CD4-positive, alpha-beta memory T cell (primary cell): ENCODE measurements at regions of chr12 and their contacts with region 1.

Region 1: GRCh38 chr12:131104463-131105350 is 151.0 kb downstream of the ADGRD1 start:
- DNase-seq: peak; percentile 60 to 76 (median 65)
- H3K4me3 ChIP-seq: no peak overlapping the region
- H3K4me3 Mint-ChIP-seq: peak overlapping the region in 6 of 8 donors; percentile 30 to 66 (median 56)
- H3K27ac ChIP-seq: no peak overlapping the region
- H3K27ac Mint-ChIP-seq: peak overlapping the region in 3 of 7 donors; percentile 34 to 56 (median 47)
- H3K4me1 ChIP-seq: peaks cover 24% of the 10 kb centered on the region
- H3K4me1 Mint-ChIP-seq: peaks cover 7 to 18% (median 10%) of the 10 kb centered on the region in 4 donors
- H3K27me3 ChIP-seq: no peaks in the 10 kb centered on the region
- H3K27me3 Mint-ChIP-seq: peaks cover 0 to 4% of the 10 kb centered on the region in 2 donors

Region 2: GRCh38 chr12:130826149-130826801 is 278.4 kb before region 1 on chr12:
- CTCF ChIA-PET with region 1: interaction called, 26 read pairs
- POLR2A ChIA-PET with region 1: no interaction called
- intact Hi-C with region 1: no loop called
- DNase-seq: peak; percentile 61 to 70 (median 68)
- H3K4me3 ChIP-seq: no peak overlapping the region
- H3K4me3 Mint-ChIP-seq: no peak overlapping the region
- H3K27ac ChIP-seq: no peak overlapping the region
- H3K27ac Mint-ChIP-seq: peak overlapping the region in 3 of 7 donors; percentile 4 to 61 (median 6)
- H3K4me1 ChIP-seq: no peaks in the 10 kb centered on the region
- H3K4me1 Mint-ChIP-seq: peaks cover 10 to 19% (median 13%) of the 10 kb centered on the region in 4 donors
- H3K27me3 ChIP-seq: no peaks in the 10 kb centered on the region
- H3K27me3 Mint-ChIP-seq: no peaks in the 10 kb centered on the region

Region 3: GRCh38 chr12:130925666-130926015 is 179.1 kb before region 1 on chr12:
- CTCF ChIA-PET with region 1: no interaction called
- POLR2A ChIA-PET with region 1: no interaction called
- intact Hi-C with region 1: no loop called
- DNase-seq: no peak
- H3K4me3 ChIP-seq: no peak overlapping the region
- H3K4me3 Mint-ChIP-seq: no peak overlapping the region
- H3K27ac ChIP-seq: no peak overlapping the region
- H3K27ac Mint-ChIP-seq: no peak overlapping the region
- H3K4me1 ChIP-seq: no peaks in the 10 kb centered on the region
- H3K4me1 Mint-ChIP-seq: no peaks in the 10 kb centered on the region
- H3K27me3 ChIP-seq: no peaks in the 10 kb centered on the region
- H3K27me3 Mint-ChIP-seq: peaks cover 23 to 33% of the 10 kb centered on the region in 2 donors

Region 4: GRCh38 chr12:131116391-131117117 is 11.8 kb after region 1 on chr12:
- CTCF ChIA-PET with region 1: interaction called, 43 read pairs
- POLR2A ChIA-PET with region 1: no interaction called
- intact Hi-C with region 1: no loop called
- DNase-seq: no peak
- H3K4me3 ChIP-seq: no peak overlapping the region
- H3K4me3 Mint-ChIP-seq: no peak overlapping the region
- H3K27ac ChIP-seq: no peak overlapping the region
- H3K27ac Mint-ChIP-seq: no peak overlapping the region
- H3K4me1 ChIP-seq: no peaks in the 10 kb centered on the region
- H3K4me1 Mint-ChIP-seq: no peaks in the 10 kb centered on the region
- H3K27me3 ChIP-seq: no peaks in the 10 kb centered on the region
- H3K27me3 Mint-ChIP-seq: peaks cover 0 to 7% of the 10 kb centered on the region in 2 donors

Region 5: DNA sequence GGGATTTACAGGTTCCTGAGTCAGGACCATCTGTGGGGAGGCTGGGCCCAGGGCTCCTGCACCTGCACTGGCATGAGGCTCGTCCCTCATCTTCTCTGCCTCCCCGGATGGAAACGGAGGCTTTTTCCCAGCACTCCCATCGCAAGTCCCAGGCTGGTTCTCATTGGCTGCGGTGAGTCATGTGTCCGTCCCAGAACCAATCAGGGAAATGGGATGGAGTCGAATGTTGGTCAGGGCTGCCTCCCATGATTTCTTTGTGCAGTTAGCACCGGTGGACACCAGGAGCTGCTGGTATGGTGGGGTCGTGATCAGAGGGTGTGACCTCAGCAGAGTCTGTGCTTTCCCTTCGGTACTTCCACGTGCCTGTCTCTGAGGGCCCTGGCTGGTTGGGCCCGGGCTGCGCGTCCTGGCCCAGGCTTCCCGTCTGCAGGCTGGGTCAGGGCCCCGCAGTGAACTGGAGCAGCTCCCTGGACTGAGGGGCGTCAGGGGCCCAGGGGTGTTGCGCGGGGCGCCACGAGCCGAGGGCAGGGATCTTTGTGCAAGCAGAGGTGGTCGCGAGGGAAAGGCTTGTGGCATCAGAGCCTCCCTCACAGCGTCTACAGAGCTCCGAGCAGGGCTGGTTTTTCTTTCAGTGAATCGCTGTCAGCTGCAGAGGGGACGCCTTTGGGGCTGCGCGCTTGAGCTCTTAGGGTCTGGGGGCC is 17.1 kb after region 1 on chr12:
- CTCF ChIA-PET with region 1: interaction called, 43 read pairs
- POLR2A ChIA-PET with region 1: no interaction called
- intact Hi-C with region 1: no loop called
- DNase-seq: no peak
- H3K4me3 ChIP-seq: no peak overlapping the region
- H3K4me3 Mint-ChIP-seq: no peak overlapping the region
- H3K27ac ChIP-seq: no peak overlapping the region
- H3K27ac Mint-ChIP-seq: no peak overlapping the region
- H3K4me1 ChIP-seq: no peaks in the 10 kb centered on the region
- H3K4me1 Mint-ChIP-seq: no peaks in the 10 kb centered on the region
- H3K27me3 ChIP-seq: no peaks in the 10 kb centered on the region
- H3K27me3 Mint-ChIP-seq: peaks cover 0 to 2% of the 10 kb centered on the region in 2 donors

Region 6: GRCh38 chr12:131132118-131132892 is 27.6 kb after region 1 on chr12:
- CTCF ChIA-PET with region 1: interaction called, 55 read pairs
- POLR2A ChIA-PET with region 1: no interaction called
- intact Hi-C with region 1: no loop called
- DNase-seq: peak; percentile 54 to 68 (median 58)
- H3K4me3 ChIP-seq: no peak overlapping the region
- H3K4me3 Mint-ChIP-seq: no peak overlapping the region
- H3K27ac ChIP-seq: no peak overlapping the region
- H3K27ac Mint-ChIP-seq: peak overlapping the region in 1 of 7 donors; percentile 31
- H3K4me1 ChIP-seq: peaks cover 6% of the 10 kb centered on the region
- H3K4me1 Mint-ChIP-seq: peaks cover 0 to 2% (median under 1%) of the 10 kb centered on the region in 4 donors
- H3K27me3 ChIP-seq: no peaks in the 10 kb centered on the region
- H3K27me3 Mint-ChIP-seq: no peaks in the 10 kb centered on the region

Region 7: DNA sequence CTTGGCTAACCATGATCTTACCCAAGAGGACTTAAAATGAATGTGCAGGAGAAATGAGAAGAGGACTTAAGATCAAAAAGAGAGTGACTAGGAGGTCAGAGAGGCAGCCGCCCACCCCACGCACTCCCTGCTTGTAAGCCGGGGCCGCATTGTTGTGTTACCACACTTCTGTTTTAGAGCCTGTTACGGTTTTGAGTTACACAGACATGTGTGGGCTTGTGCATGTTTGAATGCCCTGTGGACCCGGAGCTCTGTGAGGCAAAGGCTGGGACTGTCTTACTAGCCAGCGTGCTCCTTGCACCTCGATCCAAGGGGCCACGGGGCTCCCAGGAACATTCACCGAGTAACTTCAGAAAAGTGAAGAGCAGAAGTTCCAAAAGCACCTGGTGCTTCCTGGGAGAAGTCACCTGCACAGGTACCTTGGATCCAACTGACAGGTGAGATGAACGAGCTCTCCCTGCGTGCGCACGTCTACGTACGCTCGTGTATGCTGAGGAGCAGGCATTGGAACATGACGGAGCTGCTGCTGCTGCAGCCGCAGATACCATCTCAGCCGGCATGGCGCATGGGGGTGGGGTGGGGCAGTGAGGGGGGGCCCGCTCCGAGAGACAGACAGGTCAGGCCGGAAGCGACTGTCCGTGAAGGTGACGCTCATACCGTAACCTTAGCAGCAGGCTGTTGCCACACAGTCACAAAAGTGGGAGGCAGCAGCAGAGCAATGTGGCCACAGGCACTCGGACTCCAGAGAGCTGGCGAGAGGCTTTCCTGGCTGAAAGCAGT is 629.8 kb after region 1 on chr12:
- CTCF ChIA-PET with region 1: no interaction called
- POLR2A ChIA-PET with region 1: no interaction called
- intact Hi-C with region 1: no loop called
- DNase-seq: no peak
- H3K4me3 ChIP-seq: no peak overlapping the region
- H3K4me3 Mint-ChIP-seq: no peak overlapping the region
- H3K27ac ChIP-seq: no peak overlapping the region
- H3K27ac Mint-ChIP-seq: peak overlapping the region in 1 of 7 donors; percentile 63
- H3K4me1 ChIP-seq: no peaks in the 10 kb centered on the region
- H3K4me1 Mint-ChIP-seq: peaks cover 0 to 3% (median under 1%) of the 10 kb centered on the region in 4 donors
- H3K27me3 ChIP-seq: no peaks in the 10 kb centered on the region
- H3K27me3 Mint-ChIP-seq: no peaks in the 10 kb centered on the region

Region 8: DNA sequence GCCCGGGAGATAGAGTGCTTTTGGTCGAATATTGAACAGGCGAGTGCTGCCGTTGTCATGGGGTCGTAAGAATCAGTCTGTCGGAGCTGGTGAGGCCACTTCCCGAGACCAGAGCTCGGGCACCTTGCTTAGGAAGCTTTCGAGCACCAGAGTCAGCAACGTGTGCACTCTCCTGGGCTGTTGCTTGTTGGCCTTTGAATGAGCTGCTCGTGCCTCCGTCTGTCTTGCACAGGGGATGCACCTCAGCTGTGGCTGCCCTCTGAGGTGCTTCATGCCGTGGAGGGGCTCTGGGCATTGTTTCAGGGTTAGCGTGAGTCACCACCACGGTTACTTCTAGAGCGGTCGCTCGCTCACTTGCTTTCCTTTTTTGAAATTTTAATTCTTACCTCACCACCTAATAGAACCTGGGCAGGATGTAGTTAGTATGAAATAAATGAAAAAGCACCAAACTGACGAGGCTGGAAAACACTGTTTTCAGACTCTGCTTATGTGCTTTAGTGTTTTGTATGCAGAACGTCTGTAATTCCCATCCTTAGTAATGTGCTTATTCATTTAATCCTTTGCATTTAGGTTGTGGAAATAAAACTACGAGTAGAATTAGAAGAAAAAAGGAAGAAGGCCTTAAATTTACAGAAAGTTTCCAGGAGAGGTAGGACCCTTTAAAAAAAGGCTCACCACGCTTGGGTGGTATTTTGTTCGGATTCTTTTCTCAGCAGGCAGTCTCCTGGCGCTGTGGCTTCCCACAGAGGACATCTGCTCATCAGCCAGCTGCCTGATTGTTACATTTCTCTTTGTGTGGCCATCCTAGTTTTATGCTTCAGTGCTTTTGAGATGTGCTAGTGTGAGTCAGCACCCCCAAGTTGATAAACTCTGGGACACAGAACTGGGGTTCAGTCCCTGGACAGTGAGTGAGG is 885.6 kb after region 1 on chr12:
- CTCF ChIA-PET with region 1: no interaction called
- POLR2A ChIA-PET with region 1: no interaction called
- intact Hi-C with region 1: loop called (anchors 10 kb)
- DNase-seq: no peak
- H3K4me3 ChIP-seq: no peak overlapping the region
- H3K4me3 Mint-ChIP-seq: no peak overlapping the region
- H3K27ac ChIP-seq: no peak overlapping the region
- H3K27ac Mint-ChIP-seq: no peak overlapping the region
- H3K4me1 ChIP-seq: no peaks in the 10 kb centered on the region
- H3K4me1 Mint-ChIP-seq: peaks cover 0 to 3% (median under 1%) of the 10 kb centered on the region in 4 donors
- H3K27me3 ChIP-seq: no peaks in the 10 kb centered on the region
- H3K27me3 Mint-ChIP-seq: no peaks in the 10 kb centered on the region